ENCODE measurements at regions of chr1 and their contacts with region 1.

Region 1: DNA sequence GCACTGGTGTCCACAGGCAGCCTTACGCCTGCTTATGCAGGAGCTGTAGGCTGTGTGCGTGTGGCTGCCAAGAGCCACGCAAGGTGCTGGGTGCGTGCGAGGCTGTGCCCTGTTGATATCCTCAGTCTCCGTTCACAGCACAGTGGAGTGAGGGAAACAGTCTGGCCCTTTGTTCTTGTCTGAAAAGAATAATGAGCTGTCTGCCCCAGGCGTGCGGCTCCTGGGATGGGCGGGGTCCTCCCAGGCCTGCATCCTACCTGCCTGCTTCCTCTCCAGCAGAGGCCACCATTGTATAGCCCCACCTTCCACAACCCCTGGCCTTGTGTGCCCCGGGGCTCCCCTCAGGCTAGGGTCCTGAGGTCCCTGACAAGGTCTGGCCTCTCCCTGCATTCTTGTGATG is 47.0 kb upstream of the KDM4A start:
- DNase-seq: no peak
- H3K4me3 ChIP-seq: no peak overlapping the region
- CTCF ChIP-seq: no peak
- POLR2A ChIP-seq: no peak

Region 2: DNA sequence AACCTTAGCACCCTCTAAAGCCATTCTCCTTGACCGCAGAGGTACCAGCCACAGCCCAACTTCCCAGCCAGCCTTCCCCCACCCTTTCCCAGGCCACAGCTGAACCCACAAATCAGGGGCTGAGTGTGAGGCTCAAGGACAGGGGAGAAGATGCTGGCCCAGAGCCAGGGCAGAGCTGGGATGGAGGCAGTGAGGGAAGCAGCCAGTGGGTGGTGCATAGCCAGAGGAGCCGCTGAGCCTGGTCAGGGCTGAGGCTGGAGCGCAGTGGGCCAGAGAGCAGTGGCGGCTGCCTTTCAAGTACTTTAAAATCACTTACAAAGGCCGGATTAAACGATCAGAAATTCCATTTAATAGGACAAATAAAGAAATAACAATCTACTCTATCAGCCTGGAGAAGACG is 646.6 kb after region 1 on chr1:
- intact Hi-C with region 1: no loop called
- DNase-seq: no peak
- H3K4me3 ChIP-seq: no peak overlapping the region
- CTCF ChIP-seq: no peak
- POLR2A ChIP-seq: no peak

Region 3: GRCh38 chr1:45172024-45172423 is 1569.0 kb after region 1 on chr1:
- intact Hi-C with region 1: loop called (anchors 10 kb)
- DNase-seq: no peak
- H3K4me3 ChIP-seq: no peak overlapping the region
- CTCF ChIP-seq: no peak
- POLR2A ChIP-seq: no peak

Measured in lower leg skin (tissue), 4 donors.